Caco-2 (cell line): ENCODE measurements at regions of chr1 and their contacts with region 1.

Region 1: DNA sequence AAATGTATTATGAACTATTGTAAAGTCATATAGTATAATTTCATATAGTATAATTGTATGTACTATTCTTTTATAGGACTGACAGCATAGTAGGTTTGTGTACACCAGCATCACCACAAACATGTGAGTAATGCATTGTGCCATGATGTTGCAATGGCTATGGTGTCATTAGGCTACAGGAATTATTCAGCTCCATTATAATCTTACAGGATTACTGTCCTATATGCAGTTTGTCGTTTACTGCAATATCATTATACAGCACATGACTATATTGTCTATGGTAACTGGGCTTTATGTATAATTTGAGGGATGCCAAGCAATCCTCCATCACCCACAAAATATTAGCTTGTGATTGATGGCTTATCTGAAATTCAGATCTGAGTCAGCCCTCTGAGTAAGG is 54.2 kb upstream of the PBX1 start:
- DNase-seq: no peak
- H3K4me3 ChIP-seq: no peak overlapping the region
- H3K4me3 Mint-ChIP-seq: no peak overlapping the region
- H3K27ac Mint-ChIP-seq: no peak overlapping the region
- H3K4me1 ChIP-seq: 0 out of 2 replicates have a peak, but pooled peaks cover 6% of the 10 kb centered on the region
- H3K4me1 Mint-ChIP-seq: no peaks in the 10 kb centered on the region
- H3K27me3 ChIP-seq: no peaks in the 10 kb centered on the region
- H3K27me3 Mint-ChIP-seq: no peaks in the 10 kb centered on the region
- CTCF ChIP-seq: no peak

Region 2: DNA sequence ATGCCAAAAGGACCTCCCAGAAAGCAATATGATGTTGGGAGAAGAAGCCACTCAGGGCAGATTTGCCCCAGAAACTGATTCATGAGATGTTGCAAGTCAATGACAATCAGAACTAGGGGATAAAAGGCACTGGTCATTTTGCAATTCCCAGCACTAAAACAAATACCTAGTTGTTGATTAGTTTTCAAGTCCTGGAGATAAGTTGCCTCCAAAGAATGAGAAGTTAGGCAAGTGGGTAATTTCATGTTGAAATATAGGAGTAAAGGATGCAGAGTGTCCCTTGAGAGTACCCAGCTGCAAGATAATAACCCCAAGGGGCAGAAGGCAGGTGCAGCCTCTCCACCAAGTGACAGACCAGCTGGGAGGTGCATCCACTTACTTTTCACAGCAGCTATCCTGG is 417.8 kb after region 1 on chr1:
- CTCF ChIA-PET with region 1: no interaction called
- POLR2A ChIA-PET with region 1: no interaction called
- intact Hi-C with region 1: loop called (anchors 5 kb)
- DNase-seq: peak in 1 of 2 experiments; percentile 10
- H3K4me3 ChIP-seq: no peak overlapping the region
- H3K4me3 Mint-ChIP-seq: no peak overlapping the region
- H3K27ac Mint-ChIP-seq: no peak overlapping the region
- H3K4me1 ChIP-seq: no peaks in the 10 kb centered on the region
- H3K4me1 Mint-ChIP-seq: no peaks in the 10 kb centered on the region
- H3K27me3 ChIP-seq: no peaks in the 10 kb centered on the region
- H3K27me3 Mint-ChIP-seq: peaks cover 9% of the 10 kb centered on the region
- CTCF ChIP-seq: no peak